ENCODE measurements at regions of chr6 and their contacts with region 1.

Region 1: DNA sequence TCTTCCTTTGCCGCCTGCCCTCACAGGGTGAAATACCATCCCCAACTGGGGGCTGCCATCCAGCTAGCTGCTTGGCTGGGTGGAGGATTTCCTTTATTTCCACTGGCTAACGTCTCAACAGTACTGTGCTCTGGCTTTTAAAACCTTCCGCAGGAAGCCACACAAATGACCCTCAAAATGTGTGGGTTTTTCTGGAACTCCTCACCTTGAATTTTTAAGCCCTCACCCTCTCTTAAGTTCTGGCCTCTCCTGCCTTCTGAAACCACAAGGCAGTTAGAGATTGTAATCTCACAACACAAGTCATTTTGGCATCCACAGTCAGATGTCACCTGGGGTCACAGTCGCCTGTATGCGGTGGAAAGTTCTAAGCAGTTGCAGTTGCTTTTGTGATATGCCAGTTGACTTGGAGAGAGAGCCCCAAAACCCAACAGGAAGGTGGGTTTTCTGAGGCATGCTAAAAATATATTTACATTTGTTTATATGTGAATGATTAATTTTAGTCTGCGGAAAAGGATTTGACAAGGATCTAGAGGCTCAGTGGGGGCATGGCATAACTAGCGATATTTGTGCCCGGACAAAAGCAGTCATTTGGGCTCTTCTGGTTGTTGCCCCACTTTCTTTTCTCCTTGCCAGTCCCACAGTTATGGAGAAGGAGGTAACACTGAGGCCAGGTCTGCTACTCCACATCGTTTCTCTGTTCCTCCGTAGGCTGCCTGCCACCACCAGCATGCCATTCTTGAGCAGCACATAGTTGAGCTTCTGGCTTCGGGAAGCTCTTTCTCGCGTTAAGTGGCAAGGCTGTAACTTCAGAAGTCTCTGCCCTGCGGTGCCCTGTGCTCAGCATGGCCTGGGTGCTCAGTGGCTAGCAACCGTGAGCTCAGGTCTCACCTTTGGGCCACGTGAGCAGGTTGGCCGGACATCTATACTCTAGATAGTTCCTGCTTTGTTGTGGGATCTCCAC is 335.3 kb downstream of the CD83 start:
- DNase-seq: peak; percentile 88
- H3K4me3 Mint-ChIP-seq: peak overlapping the region; percentile 34
- H3K27ac Mint-ChIP-seq: peak overlapping the region; percentile 88
- H3K4me1 Mint-ChIP-seq: peaks cover 76% of the 10 kb centered on the region
- H3K27me3 Mint-ChIP-seq: no peaks in the 10 kb centered on the region

Region 2: DNA sequence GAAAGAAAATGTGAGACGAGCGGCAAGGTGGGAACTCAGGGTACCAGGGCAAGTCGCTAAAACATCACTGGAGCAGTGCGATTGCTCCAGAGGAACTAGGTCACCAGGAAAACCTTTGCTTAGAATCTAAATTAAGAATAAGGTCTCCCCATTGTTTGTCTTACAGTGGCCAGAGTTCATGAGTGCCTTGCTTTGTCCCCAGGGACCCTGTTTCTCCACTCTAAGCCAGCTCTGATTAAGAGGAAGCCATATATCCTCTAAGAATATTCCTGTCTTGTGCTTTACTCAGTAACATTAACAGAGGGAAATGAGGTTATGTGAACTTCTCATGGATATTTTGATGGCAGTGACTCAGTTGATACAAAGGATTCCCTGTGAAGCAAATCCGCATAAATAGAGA is 29.5 kb before region 1 on chr6:
- CTCF ChIA-PET with region 1: no interaction called
- POLR2A ChIA-PET with region 1: interaction called, 4 read pairs
- intact Hi-C with region 1: loop called (anchors 1 kb)
- DNase-seq: no peak
- H3K4me3 Mint-ChIP-seq: no peak overlapping the region
- H3K27ac Mint-ChIP-seq: peak overlapping the region; percentile 73
- H3K4me1 Mint-ChIP-seq: peaks cover 46% of the 10 kb centered on the region
- H3K27me3 Mint-ChIP-seq: no peaks in the 10 kb centered on the region

Region 3: DNA sequence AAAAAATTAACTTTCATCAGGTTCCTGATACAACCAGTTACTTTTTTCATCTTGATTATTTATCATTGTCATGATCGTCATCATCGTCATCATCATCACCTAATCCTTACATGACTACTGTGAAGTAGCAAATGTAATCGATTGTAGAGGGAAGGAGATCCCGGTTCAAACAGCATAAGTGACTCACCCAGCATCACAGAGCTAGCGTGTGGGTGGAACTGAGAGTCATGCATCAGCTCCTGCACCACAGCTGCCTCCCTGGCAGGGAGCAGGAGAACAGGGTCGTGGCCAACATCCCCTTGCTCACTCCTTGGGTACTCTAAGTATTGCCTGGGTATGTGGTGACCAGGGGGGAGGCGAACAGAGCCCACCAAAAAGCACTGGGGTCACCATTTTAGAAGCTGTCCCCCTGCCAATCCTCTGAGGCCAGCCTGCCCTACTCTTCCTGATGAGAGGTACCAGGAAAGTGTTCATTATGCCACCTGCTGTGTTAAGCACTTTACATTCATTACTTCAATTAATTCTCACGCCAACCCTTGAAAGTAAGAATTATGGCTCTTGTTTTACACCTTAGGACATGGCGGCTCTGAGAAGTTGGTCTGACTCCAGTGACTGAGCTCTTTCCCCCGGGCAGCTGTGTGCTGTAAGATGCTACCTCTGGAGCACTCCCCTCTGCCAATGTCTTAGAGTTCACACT is 90.0 kb after region 1 on chr6:
- CTCF ChIA-PET with region 1: no interaction called
- POLR2A ChIA-PET with region 1: no interaction called
- intact Hi-C with region 1: loop called (anchors 2 kb)
- DNase-seq: peak; percentile 90
- H3K4me3 Mint-ChIP-seq: no peak overlapping the region
- H3K27ac Mint-ChIP-seq: peak overlapping the region; percentile 53
- H3K4me1 Mint-ChIP-seq: peaks cover 31% of the 10 kb centered on the region
- H3K27me3 Mint-ChIP-seq: peaks cover 2% of the 10 kb centered on the region

Region 4: GRCh38 chr6:14660806-14661579 is 208.1 kb after region 1 on chr6:
- CTCF ChIA-PET with region 1: no interaction called
- POLR2A ChIA-PET with region 1: no interaction called
- intact Hi-C with region 1: loop called (anchors 5 kb)
- DNase-seq: peak; percentile 64
- H3K4me3 Mint-ChIP-seq: no peak overlapping the region
- H3K27ac Mint-ChIP-seq: no peak overlapping the region
- H3K4me1 Mint-ChIP-seq: peaks cover 57% of the 10 kb centered on the region
- H3K27me3 Mint-ChIP-seq: no peaks in the 10 kb centered on the region

Region 5: GRCh38 chr6:14857501-14857900 is 404.7 kb after region 1 on chr6:
- CTCF ChIA-PET with region 1: no interaction called
- POLR2A ChIA-PET with region 1: no interaction called
- intact Hi-C with region 1: loop called (anchors 1 kb)
- DNase-seq: peak; percentile 84
- H3K4me3 Mint-ChIP-seq: peak overlapping the region; percentile 56
- H3K27ac Mint-ChIP-seq: peak overlapping the region; percentile 95
- H3K4me1 Mint-ChIP-seq: peaks cover 48% of the 10 kb centered on the region
- H3K27me3 Mint-ChIP-seq: no peaks in the 10 kb centered on the region

Region 6: DNA sequence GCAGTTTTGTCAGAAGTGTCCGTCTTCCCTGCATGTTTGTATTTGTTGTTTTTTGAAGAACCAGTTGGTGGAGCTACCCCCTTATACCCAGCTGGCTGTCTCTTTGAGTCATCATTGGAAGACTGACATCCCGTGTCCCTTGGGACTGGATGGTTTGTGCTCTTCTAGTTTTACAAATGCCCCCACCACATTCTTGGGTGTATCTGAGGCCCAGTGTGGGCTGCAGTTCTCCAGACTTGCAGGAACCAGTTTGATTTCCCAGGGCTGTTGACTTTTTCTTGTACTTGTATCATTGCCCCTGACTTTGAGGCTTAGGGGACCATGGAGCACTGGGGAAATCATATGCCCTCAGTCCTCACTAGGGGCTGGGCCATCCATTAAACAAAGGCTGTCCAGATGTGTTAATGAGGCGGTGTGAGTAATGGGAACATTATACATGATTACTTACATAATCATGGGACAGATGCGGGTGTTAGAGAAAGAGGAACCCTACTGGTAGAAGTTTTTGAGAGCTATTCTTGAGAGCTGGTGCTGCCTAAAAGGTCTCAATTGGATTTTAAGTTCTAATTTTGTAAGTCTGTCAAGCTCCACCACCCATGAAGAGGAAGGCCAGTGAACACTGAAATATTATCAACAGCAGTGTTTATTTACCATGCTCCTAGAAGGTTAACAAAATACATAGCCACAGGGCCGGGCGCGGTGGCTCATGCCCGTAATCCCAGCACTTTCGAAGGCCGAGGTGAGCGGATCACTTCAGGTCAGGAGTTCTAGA is 801.4 kb after region 1 on chr6:
- CTCF ChIA-PET with region 1: no interaction called
- POLR2A ChIA-PET with region 1: no interaction called
- intact Hi-C with region 1: loop called (anchors 5 kb)
- DNase-seq: no peak
- H3K4me3 Mint-ChIP-seq: peak overlapping the region; percentile 96
- H3K27ac Mint-ChIP-seq: peak overlapping the region; percentile 98
- H3K4me1 Mint-ChIP-seq: peaks cover 93% of the 10 kb centered on the region
- H3K27me3 Mint-ChIP-seq: no peaks in the 10 kb centered on the region

Measured in activated CD4-positive, alpha-beta memory T cell treated with anti-CD3 and anti-CD28 coated beads for 36 hours (primary cell).